MCF 10A (cell line): ENCODE measurements at regions of chr2 and their contacts with region 1.

Region 1: DNA sequence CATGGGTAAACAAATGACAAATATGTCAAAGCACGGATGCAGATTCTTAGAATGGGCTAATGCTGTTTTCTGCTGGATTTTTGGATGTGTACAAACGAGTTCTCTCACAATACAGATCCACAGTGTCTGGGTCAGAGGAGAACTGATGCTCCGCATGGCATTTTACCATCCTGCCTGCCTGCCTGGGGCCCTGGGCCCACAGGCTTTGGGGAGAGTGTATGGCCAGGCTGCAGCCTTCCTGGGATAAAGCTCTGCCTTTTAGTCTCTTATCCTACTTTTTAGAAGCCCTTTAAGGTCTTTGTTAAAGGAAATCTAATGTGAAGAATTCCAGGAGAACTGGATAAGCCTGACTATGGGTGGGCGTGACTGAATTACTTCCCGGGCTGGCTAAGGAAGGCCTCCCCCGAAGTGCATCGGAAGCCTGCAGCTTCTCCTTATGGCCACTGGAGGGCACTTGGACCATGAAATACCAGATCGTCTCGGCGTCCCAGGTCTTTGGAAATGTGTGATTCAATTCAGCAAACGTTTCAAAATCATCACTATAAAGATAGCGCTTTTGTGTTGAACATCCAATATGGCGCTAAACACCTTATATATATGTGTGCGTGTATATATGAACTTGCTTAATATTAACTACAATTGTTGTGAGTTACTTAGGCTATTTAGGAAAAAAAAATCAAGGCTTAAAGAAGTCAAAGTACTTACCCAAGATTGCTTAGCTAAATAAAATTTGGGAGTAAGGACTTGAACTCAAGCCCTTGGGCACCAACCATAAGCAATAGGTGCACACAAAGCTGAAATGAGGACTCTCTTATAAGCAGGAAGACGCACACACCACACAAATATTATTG is 15.2 kb upstream of the DNPEP start:
- DNase-seq: peak; percentile 85
- H3K4me3 Mint-ChIP-seq: no peak overlapping the region
- H3K27ac Mint-ChIP-seq: no peak overlapping the region
- H3K4me1 Mint-ChIP-seq: peaks cover 6% of the 10 kb centered on the region
- H3K27me3 Mint-ChIP-seq: no peaks in the 10 kb centered on the region
- CTCF ChIP-seq: peak; percentile 86

Region 2: GRCh38 chr2:219418155-219418569 is 15.3 kb after region 1 on chr2 and contains the start of gene DES:
- CTCF ChIA-PET with region 1: interaction called, 12 read pairs
- POLR2A ChIA-PET with region 1: interaction called, 3 read pairs
- intact Hi-C with region 1: no loop called
- DNase-seq: no peak
- H3K4me3 Mint-ChIP-seq: no peak within 1 kb of the TSS
- H3K27ac Mint-ChIP-seq: no peak within 1 kb of the TSS
- H3K4me1 Mint-ChIP-seq: no peaks in the 10 kb centered on the region
- H3K27me3 Mint-ChIP-seq: no peaks in the 10 kb centered on the region
- CTCF ChIP-seq: no peak
- total RNA-seq, gene DES: not detected in 2 replicates

Region 3: GRCh38 chr2:219459460-219460311 is 56.8 kb after region 1 on chr2:
- CTCF ChIA-PET with region 1: interaction called, 41 read pairs
- POLR2A ChIA-PET with region 1: interaction called, 3 read pairs
- intact Hi-C with region 1: loop called (anchors 1 kb)
- DNase-seq: peak; percentile 55
- H3K4me3 Mint-ChIP-seq: no peak overlapping the region
- H3K27ac Mint-ChIP-seq: no peak overlapping the region
- H3K4me1 Mint-ChIP-seq: peaks cover 6% of the 10 kb centered on the region
- H3K27me3 Mint-ChIP-seq: no peaks in the 10 kb centered on the region
- CTCF ChIP-seq: peak; percentile 76

Region 4: GRCh38 chr2:219498280-219499057 is 95.6 kb after region 1 on chr2 and contains the start of gene GMPPA:
- CTCF ChIA-PET with region 1: interaction called, 11 read pairs
- POLR2A ChIA-PET with region 1: interaction called, 4 read pairs
- intact Hi-C with region 1: no loop called
- DNase-seq: peak; percentile 99
- H3K4me3 Mint-ChIP-seq: peak within 1 kb of the TSS; percentile 92
- H3K27ac Mint-ChIP-seq: peak within 1 kb of the TSS; percentile 93
- H3K4me1 Mint-ChIP-seq: peaks cover 24% of the 10 kb centered on the region
- H3K27me3 Mint-ChIP-seq: no peaks in the 10 kb centered on the region
- CTCF ChIP-seq: no peak
- total RNA-seq, gene GMPPA: 70.7 and 80.2 TPM in 2 replicates

Region 5: DNA sequence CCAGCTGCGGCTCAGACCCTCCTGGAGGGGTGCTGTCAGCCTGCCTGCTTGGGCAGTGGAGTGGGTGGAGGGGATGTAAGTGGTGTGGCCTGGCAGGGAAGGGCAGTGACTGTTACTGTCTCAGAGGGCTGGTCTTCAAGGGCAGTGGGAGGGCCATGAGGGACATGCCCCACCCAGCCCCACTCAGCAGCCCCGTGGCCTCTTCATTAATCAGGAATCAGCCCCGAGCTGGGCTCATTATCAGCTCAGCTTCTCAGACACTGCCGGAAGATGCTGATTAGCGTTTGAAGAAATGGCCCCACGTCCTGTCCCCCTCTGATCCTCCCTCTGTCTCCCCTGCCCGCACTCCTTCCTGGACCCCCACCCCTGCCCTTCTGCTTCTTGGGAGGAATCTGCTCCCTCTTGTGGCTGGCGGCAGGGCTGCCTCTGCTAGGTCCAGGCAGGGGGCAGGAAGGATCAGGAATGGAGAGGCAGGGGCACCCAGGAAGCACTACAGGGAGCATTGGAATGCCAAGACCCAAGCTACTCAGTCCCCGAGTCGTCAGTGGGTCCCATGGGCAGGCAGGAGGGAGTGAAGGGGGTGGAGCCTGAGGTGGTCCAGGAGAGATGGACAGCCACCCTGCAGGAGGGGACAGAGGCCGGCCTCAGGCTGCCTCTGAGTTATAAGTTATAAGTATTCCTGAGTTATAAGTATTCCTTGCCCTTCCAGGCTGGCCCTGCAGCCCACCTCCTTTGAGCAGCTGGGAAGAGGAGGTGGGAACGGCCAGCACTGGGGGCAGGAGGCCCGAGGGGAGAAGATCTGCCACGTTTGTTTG is 118.4 kb after region 1 on chr2:
- CTCF ChIA-PET with region 1: interaction called, 287 read pairs
- POLR2A ChIA-PET with region 1: interaction called, 5 read pairs
- intact Hi-C with region 1: no loop called
- DNase-seq: peak; percentile 29
- H3K4me3 Mint-ChIP-seq: no peak overlapping the region
- H3K27ac Mint-ChIP-seq: no peak overlapping the region
- H3K4me1 Mint-ChIP-seq: peaks cover 18% of the 10 kb centered on the region
- H3K27me3 Mint-ChIP-seq: peaks cover 58% of the 10 kb centered on the region
- CTCF ChIP-seq: peak; percentile 51

Region 6: DNA sequence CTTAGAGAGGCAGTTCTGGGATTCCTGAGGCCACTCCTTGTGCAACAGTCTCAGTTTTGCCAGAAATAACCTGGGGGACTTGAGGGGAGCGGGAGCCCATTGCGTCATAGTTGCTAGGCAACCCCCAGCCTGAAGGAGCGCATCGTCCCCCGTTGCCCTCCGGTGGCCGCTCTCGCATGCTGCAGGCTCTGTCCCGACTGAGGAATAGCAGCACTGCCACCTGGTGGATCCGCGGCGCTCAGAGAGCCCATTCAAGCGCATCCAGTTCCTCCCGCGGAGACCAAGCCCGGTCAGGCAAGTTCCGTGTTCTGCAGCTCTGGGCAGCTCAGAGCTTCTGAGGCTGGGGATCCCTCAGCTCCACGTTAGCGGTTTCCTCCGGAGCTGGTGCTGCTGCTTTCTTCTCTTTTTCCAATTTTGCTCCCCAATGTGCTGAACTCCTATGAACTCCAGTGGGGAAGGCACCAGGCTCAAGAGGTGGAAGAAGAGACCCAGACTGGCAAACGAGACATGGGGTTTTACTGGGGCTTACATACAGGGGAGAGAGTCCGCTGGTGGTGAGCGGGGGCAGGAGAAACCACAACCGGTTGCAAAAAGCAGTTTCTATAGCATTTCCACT is 239.7 kb after region 1 on chr2:
- CTCF ChIA-PET with region 1: interaction called, 10 read pairs
- POLR2A ChIA-PET with region 1: no interaction called
- intact Hi-C with region 1: loop called (anchors 2 kb)
- DNase-seq: peak; percentile 95
- H3K4me3 Mint-ChIP-seq: no peak overlapping the region
- H3K27ac Mint-ChIP-seq: no peak overlapping the region
- H3K4me1 Mint-ChIP-seq: peaks cover 12% of the 10 kb centered on the region
- H3K27me3 Mint-ChIP-seq: no peaks in the 10 kb centered on the region
- CTCF ChIP-seq: peak; percentile 96